GM10248 (cell line): ENCODE measurements at regions of chr9 and their contacts with region 1.

Region 1: DNA sequence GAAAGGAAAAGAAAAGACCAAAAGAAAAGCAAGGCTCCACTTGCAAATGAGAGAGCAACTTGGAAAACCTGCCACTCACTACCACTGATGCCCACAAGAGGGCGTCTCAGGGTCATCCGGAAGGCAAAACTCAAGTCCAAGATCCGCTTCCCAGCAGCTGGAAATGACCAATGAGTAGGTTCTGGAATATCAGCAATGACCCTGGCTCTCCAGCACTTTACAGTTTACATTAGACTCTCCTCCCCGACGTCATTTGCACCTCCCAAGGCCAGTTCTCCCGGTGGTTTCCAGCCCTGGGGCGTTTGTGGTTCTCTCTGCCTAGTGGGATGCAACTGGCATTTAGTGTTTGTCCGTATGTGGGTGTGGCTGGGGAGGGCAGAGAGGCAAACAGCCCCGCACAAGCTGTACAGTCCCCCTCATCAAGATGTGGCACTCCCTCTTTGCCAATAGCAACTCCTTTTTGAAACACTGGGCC is 193.8 kb upstream of the ZNF618 start:
- DNase-seq: peak; percentile 62
- CTCF ChIP-seq: peak; percentile 71

Region 2: DNA sequence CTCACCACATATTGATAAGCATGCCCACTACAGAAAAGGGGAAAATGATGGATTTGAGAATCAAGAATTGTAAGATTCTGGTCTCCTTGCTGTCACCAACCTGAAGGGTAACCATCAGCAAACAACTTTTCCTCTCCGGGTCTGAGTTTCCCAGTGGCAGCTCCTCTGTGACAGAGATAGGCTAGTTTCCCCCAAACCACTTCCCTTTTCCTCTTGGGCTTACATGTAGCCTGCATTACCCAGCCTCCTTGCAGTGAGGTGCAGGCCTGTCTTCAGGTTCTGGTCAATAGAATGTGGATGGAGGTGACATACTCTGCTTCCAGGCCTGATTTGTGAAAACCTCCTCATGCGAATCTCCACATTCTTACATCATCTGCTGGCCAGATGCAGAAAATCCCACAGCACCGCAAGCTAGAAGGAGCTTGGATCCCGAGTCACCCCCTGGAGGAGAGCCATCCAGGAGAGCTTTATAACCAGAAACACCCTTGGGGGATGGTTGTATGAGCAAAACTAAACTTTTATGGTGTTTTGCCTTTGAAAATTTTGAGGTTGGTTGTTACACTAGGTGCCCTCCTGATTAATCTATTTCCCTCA is 12.7 kb before region 1 on chr9:
- CTCF ChIA-PET with region 1: interaction called, 22 read pairs
- POLR2A ChIA-PET with region 1: no interaction called
- DNase-seq: no peak
- CTCF ChIP-seq: no peak